ENCODE measurements at regions of chr10 and their contacts with region 1.

Region 1: DNA sequence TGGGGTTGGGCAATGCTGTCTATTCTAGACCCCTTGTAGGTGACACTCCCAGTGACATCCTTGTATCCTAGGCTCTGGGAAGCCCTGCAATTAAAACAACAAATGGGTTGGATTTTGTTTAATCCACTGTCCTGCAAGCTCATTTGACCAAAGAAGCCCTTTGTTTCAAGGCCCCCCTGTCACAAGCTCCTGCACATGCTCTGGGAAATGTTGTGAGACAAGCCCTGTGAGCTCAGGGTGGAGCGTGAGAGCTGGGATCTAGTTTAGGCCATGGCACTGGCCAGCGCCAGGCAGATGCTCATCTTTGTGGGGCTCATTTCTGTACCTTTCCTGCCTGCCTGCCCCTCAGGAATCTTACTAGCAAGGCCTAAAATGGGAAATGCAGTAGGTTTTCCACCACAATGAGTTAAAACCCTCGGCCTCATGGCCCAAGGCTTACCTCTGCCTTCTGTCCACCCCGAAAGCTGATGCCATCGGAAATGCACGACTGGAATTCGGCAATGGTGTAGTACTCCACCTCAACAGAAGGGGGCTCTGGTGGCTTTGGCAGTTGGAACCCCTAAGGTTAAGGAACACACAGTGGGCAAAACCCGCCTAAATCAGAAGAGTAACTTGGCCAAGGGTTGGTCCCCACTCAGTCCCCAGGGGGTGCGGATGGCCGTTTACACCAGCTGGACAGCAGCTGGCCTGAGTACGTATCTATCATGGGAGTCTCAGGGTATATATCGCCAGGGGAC is 112.0 kb downstream of the NEURL1 start:
- DNase-seq: no peak
- H3K4me3 ChIP-seq: no peak overlapping the region
- CTCF ChIP-seq: peak; percentile 70

Region 2: DNA sequence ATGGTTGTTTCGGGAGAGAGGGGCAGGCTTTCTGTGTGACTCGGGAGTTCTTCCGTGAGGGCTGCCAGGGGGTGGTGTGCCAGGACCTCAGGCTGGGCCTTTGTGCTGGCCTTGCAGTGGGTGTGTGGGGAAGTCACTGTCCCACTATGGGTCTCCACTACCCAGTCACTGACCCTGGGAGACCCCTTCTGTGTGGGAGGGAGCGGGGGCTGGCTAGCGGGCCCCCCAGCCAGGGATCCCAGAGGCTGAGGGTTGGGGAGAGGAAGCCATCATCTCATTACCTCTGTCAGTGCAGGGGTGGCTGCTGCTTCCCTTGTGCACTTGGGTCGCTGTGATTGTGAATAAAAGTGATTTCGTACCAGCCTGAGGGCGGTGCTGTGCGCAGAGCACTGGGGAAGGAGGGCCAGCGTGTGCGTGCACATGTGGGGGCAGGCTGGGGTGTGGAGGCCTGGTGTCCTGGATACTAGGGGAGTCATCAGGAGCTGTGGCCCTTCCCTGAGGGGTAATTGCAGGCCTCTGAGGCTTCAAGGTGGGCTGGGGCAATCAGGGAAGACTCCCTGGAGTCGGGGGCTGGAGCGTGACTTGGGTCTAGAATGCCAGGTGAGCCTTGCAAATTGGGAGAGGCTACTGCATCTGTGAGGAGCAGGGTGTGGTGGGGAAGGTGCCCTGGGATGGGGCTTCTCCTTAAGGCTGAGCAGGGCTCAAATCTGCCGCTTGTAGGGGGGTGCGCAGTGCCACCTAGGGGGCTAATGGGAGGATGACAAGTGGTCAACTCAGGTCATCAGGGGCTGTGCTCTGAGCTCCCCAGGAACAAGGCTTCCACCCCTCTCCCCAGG is 13.1 kb before region 1 on chr10:
- CTCF ChIA-PET with region 1: interaction called, 20 read pairs
- POLR2A ChIA-PET with region 1: no interaction called
- DNase-seq: no peak
- H3K4me3 ChIP-seq: no peak overlapping the region
- CTCF ChIP-seq: peak; percentile 80

Region 3: DNA sequence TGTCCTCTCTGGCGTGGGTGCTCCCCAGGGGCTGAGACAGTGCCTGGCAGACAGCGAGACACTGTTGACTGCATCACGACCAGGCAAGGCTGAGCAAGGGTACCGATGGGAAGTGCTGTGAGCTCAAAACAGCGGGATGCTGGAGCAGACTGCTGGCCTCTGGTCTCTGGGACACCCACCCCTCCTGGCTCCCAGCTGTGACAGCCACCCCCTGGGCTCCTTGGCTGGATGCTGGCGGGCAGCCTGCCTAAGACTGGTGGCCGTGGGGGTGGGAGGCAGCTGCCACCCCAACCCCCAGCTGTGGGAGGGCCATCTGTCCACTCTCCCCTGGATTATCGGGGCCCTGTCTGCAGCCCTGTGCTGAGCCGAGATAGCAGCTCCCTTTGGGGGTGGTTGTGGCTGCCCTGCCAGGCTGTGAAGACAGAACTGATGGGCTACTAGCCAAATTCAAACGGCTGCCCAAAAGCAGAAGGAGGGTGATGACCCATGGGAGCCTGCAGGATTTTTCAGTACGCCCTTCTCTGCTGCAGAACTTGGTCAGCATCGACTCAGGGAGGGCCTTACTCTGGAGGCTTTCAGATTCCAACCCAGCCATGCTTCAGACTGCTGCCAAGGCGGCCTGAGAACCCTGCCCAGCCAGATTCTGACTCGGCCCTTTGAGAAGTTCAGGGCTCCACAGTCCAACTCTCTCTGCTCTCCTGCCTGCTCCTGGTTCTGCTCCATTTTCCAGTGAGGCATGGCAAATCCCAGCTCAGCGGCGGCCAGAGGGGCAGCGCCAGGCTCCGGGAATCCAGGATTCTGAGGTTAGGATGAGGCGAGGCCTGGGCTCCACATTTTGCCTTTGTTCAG is 13.3 kb after region 1 on chr10:
- CTCF ChIA-PET with region 1: interaction called, 21 read pairs
- POLR2A ChIA-PET with region 1: no interaction called
- DNase-seq: no peak
- H3K4me3 ChIP-seq: no peak overlapping the region
- CTCF ChIP-seq: no peak

Region 4: DNA sequence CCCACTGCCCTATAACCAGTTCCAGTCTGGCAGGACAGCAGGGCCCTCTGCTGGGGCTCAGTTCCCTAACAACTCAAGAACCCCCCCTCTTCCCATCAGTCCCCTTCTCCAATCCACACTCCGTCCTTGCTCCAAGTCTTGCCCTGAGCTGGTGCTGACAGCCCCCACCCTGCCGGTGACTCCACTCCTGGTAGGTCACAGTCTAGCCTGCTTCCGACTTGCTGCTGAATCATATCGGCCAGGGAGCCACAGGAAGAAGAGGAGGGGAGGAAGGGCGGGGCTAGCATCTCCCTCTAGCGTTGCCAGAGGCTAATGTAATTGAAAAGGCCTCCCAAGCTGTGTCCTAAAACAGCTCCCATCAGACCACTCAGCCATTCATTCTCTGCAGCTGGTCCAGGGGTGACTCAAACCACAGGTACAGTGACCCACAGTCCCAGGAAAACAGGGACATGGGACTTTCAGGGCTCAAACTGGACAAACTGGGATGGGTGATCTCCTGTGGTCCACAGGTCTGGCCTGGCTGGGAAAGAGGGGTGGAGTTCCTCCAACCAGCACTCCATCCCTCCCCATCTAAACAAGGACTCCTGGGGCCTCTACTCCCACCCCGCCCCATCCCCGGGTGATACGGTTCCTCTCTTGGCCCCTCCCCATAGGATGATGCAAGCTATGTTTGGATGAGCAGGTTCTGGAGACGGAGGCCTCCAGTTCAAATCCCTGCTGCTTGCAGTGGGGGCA is 91.1 kb after region 1 on chr10:
- CTCF ChIA-PET with region 1: interaction called, 447 read pairs
- POLR2A ChIA-PET with region 1: no interaction called
- DNase-seq: peak; percentile 75
- H3K4me3 ChIP-seq: no peak overlapping the region
- CTCF ChIP-seq: peak; percentile 68

Region 5: GRCh38 chr10:103739039-103739764 is 133.7 kb after region 1 on chr10:
- CTCF ChIA-PET with region 1: no interaction called
- POLR2A ChIA-PET with region 1: no interaction called
- DNase-seq: peak; percentile 84
- H3K4me3 ChIP-seq: peak overlapping the region; percentile 32
- CTCF ChIP-seq: no peak

Measured in AG04449 (cell line).